Left ventricle myocardium inferior (tissue), 1 donor: ENCODE measurements at regions of chr20 and their contacts with region 1.

Region 1: DNA sequence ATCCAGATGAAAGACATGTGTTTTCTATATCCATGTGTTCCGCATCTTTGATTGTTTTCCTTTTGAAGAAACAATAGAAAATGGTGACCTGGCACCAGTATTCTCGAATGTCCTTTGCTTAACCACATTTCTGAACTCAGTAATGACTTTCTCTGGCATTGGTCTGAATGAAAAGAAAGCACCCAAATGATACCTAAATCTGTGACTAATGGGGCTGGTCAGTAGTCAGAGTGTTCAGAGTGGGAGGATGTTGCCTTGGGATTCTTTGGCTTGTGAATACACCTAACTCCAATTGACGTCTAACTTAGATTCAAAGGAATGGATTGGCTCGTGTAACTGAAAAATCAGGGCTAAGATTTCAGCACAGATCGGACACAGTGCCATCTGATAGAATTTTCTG is 27.1 kb downstream of the PARD6B start:
- DNase-seq: no peak
- H3K4me3 ChIP-seq: no peak overlapping the region
- H3K27ac ChIP-seq: no peak overlapping the region
- H3K4me1 ChIP-seq: peaks cover 16% of the 10 kb centered on the region
- H3K27me3 ChIP-seq: no peaks in the 10 kb centered on the region
- CTCF ChIP-seq: no peak

Region 2: GRCh38 chr20:50625986-50626677 is 132.3 kb before region 1 on chr20:
- intact Hi-C with region 1: loop called (anchors 10 kb)
- DNase-seq: peak; percentile 70
- H3K4me3 ChIP-seq: no peak overlapping the region
- H3K27ac ChIP-seq: peak overlapping the region; percentile 65
- H3K4me1 ChIP-seq: peaks cover 35% of the 10 kb centered on the region
- H3K27me3 ChIP-seq: no peaks in the 10 kb centered on the region
- CTCF ChIP-seq: peak; percentile 67

Region 3: GRCh38 chr20:50824193-50824632 is 65.7 kb after region 1 on chr20:
- intact Hi-C with region 1: no loop called
- DNase-seq: no peak
- H3K4me3 ChIP-seq: no peak overlapping the region
- H3K27ac ChIP-seq: no peak overlapping the region
- H3K4me1 ChIP-seq: no peaks in the 10 kb centered on the region
- H3K27me3 ChIP-seq: no peaks in the 10 kb centered on the region
- CTCF ChIP-seq: no peak